Mucosa of descending colon (tissue), 3 donors: ENCODE measurements at regions of chr18 and their contacts with region 1.

Region 1: GRCh38 chr18:48059455-48060010 is 129.1 kb upstream of the SMAD2 start:
- DNase-seq: no peak
- ATAC-seq: no peak
- H3K4me3 ChIP-seq: no peak overlapping the region
- H3K4me1 ChIP-seq: peaks cover 13% of the 10 kb centered on the region
- CTCF ChIP-seq: no peak

Region 2: GRCh38 chr18:48002933-48003365 is 56.6 kb before region 1 on chr18:
- intact Hi-C with region 1: no loop called
- DNase-seq: peak in 2 of 3 donors; percentile 59 to 78
- ATAC-seq: peak; percentile 85
- H3K4me3 ChIP-seq: no peak overlapping the region
- H3K4me1 ChIP-seq: peaks cover 9% of the 10 kb centered on the region
- CTCF ChIP-seq: no peak

Region 3: DNA sequence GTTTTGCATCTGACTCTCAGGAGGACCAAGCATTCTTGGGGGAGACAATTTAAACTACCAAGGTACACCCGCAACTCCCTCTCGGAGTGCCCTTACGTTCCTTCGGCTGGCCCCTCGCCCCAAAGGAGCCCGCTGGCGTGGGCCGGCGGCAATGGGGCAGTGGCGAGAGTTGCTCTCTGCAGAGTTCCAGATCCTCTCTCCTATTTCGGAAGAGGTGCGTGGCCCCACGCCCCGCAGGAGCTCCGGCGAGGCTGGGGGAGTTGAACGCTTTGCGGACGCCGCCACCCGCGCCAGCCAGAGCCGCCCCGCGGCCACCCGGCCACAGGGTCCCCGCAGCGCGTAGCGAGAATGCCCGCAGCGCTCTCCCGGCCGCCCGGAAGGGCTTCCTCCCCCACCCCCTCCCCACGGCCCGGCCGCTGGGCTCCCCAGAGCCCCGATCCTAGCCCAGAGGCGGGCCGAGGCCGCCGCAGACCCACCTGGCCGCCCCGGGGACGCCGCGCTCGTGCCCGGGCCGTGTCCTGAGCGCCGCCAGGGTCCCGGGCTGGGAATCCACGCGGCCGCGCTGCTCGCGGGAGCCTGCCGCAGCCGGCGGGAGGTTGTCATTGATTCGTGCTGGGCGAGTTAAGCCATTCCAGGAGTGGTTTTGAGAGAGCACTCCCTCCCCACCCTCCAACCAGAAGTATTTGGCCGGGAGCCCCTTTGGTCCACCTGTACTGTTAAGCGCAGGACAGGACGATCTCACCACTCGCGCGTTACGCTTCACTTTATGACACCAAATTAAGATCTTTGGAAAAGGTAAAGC is 77.2 kb after region 1 on chr18:
- intact Hi-C with region 1: loop called in 1 of 2 experiments (anchors 10 kb)
- DNase-seq: peak in 2 of 3 donors; percentile 67 to 71
- ATAC-seq: peak; percentile 7
- H3K4me3 ChIP-seq: peak overlapping the region; percentile 50
- H3K4me1 ChIP-seq: peaks cover 40% of the 10 kb centered on the region
- CTCF ChIP-seq: no peak